B cell (primary cell): ENCODE measurements at regions of chr19 and their contacts with region 1.

Region 1: GRCh38 chr19:13880059-13881043 is 3.4 kb downstream of the NANOS3 start:
- DNase-seq: peak; percentile 96
- ATAC-seq: peak; percentile 98
- H3K4me3 ChIP-seq: peak overlapping the region in 3 of 5 experiments; percentile 12 to 27 (median 27)
- H3K4me3 Mint-ChIP-seq: peak overlapping the region; percentile 37
- H3K27ac ChIP-seq: no peak overlapping the region
- H3K27ac Mint-ChIP-seq: peak overlapping the region; percentile 61
- H3K4me1 ChIP-seq: peaks cover 26 to 34% of the 10 kb centered on the region in 2 donors
- H3K4me1 Mint-ChIP-seq: peaks cover 25% of the 10 kb centered on the region
- H3K27me3 ChIP-seq: peaks cover 0 to 3% (median 0%) of the 10 kb centered on the region in 4 experiments
- H3K27me3 Mint-ChIP-seq: no peaks in the 10 kb centered on the region
- CTCF ChIP-seq: peak; percentile 99

Region 2: GRCh38 chr19:13808856-13809255 is 71.5 kb before region 1 on chr19:
- CTCF ChIA-PET with region 1: no interaction called
- POLR2A ChIA-PET with region 1: no interaction called
- intact Hi-C with region 1: no loop called
- DNase-seq: peak; percentile 8
- ATAC-seq: no peak
- H3K4me3 ChIP-seq: no peak overlapping the region
- H3K4me3 Mint-ChIP-seq: no peak overlapping the region
- H3K27ac ChIP-seq: no peak overlapping the region
- H3K27ac Mint-ChIP-seq: no peak overlapping the region
- H3K4me1 ChIP-seq: no peaks in the 10 kb centered on the region
- H3K4me1 Mint-ChIP-seq: no peaks in the 10 kb centered on the region
- H3K27me3 ChIP-seq: no peaks in the 10 kb centered on the region
- H3K27me3 Mint-ChIP-seq: no peaks in the 10 kb centered on the region
- CTCF ChIP-seq: no peak

Region 3: GRCh38 chr19:13905938-13906904 is 25.9 kb after region 1 on chr19 and contains the starts of genes BRME1 and CC2D1A:
- CTCF ChIA-PET with region 1: interaction called, 7 read pairs
- POLR2A ChIA-PET with region 1: no interaction called
- intact Hi-C with region 1: loop called (anchors 1 kb)
- DNase-seq: peak; percentile 95
- ATAC-seq: peak; percentile 98
- H3K4me3 ChIP-seq: peak within 1 kb of the TSS; percentile 38 to 90 (median 82)
- H3K4me3 Mint-ChIP-seq: peak within 1 kb of the TSS; percentile 89
- H3K27ac ChIP-seq: peak within 1 kb of the TSS; percentile 52 to 62
- H3K27ac Mint-ChIP-seq: peak within 1 kb of the TSS; percentile 80
- H3K4me1 ChIP-seq: peaks cover 9 to 13% of the 10 kb centered on the region in 2 donors
- H3K4me1 Mint-ChIP-seq: peaks cover 13% of the 10 kb centered on the region
- H3K27me3 ChIP-seq: no peaks in the 10 kb centered on the region
- H3K27me3 Mint-ChIP-seq: no peaks in the 10 kb centered on the region
- CTCF ChIP-seq: no peak
- total RNA-seq, gene BRME1: 1.7 and 2.4 TPM in 2 replicates
- total RNA-seq, gene CC2D1A: 47.1 and 47.2 TPM in 2 replicates

Region 4: GRCh38 chr19:14031719-14032480 is 151.5 kb after region 1 on chr19 and contains the start of gene IL27RA:
- CTCF ChIA-PET with region 1: interaction called, 14 read pairs
- POLR2A ChIA-PET with region 1: no interaction called
- intact Hi-C with region 1: loop called (anchors 1 kb)
- DNase-seq: peak; percentile 84
- ATAC-seq: peak; percentile 72
- H3K4me3 ChIP-seq: peak within 1 kb of the TSS; percentile 26 to 95 (median 83)
- H3K4me3 Mint-ChIP-seq: peak within 1 kb of the TSS; percentile 94
- H3K27ac ChIP-seq: peak within 1 kb of the TSS; percentile 83 to 94
- H3K27ac Mint-ChIP-seq: peak within 1 kb of the TSS; percentile 94
- H3K4me1 ChIP-seq: peaks cover 22 to 42% of the 10 kb centered on the region in 2 donors
- H3K4me1 Mint-ChIP-seq: peaks cover 38% of the 10 kb centered on the region
- H3K27me3 ChIP-seq: no peaks in the 10 kb centered on the region
- H3K27me3 Mint-ChIP-seq: no peaks in the 10 kb centered on the region
- CTCF ChIP-seq: peak; percentile 68
- total RNA-seq, gene IL27RA: 38.2 and 38.6 TPM in 2 replicates

Region 5: GRCh38 chr19:14059093-14059480 is 178.7 kb after region 1 on chr19:
- CTCF ChIA-PET with region 1: interaction called, 16 read pairs
- POLR2A ChIA-PET with region 1: no interaction called
- intact Hi-C with region 1: no loop called
- DNase-seq: peak; percentile 68
- ATAC-seq: no peak
- H3K4me3 ChIP-seq: no peak overlapping the region
- H3K4me3 Mint-ChIP-seq: no peak overlapping the region
- H3K27ac ChIP-seq: no peak overlapping the region
- H3K27ac Mint-ChIP-seq: no peak overlapping the region
- H3K4me1 ChIP-seq: peaks cover 18 to 22% of the 10 kb centered on the region in 2 donors
- H3K4me1 Mint-ChIP-seq: peaks cover 18% of the 10 kb centered on the region
- H3K27me3 ChIP-seq: peaks cover 0 to 54% (median 28%) of the 10 kb centered on the region in 4 experiments
- H3K27me3 Mint-ChIP-seq: peaks cover 37% of the 10 kb centered on the region
- CTCF ChIP-seq: peak; percentile 81

Region 6: GRCh38 chr19:14081325-14082093 is 201.2 kb after region 1 on chr19:
- CTCF ChIA-PET with region 1: interaction called, 10 read pairs
- POLR2A ChIA-PET with region 1: no interaction called
- intact Hi-C with region 1: no loop called
- DNase-seq: peak; percentile 99
- ATAC-seq: peak; percentile 91
- H3K4me3 ChIP-seq: peak overlapping the region; percentile 65 to 89 (median 77)
- H3K4me3 Mint-ChIP-seq: peak overlapping the region; percentile 96
- H3K27ac ChIP-seq: peak overlapping the region; percentile 72 to 89
- H3K27ac Mint-ChIP-seq: peak overlapping the region; percentile 96
- H3K4me1 ChIP-seq: peaks cover 14 to 18% of the 10 kb centered on the region in 2 donors
- H3K4me1 Mint-ChIP-seq: peaks cover 12% of the 10 kb centered on the region
- H3K27me3 ChIP-seq: no peaks in the 10 kb centered on the region
- H3K27me3 Mint-ChIP-seq: no peaks in the 10 kb centered on the region
- CTCF ChIP-seq: peak; percentile 10

Region 7: DNA sequence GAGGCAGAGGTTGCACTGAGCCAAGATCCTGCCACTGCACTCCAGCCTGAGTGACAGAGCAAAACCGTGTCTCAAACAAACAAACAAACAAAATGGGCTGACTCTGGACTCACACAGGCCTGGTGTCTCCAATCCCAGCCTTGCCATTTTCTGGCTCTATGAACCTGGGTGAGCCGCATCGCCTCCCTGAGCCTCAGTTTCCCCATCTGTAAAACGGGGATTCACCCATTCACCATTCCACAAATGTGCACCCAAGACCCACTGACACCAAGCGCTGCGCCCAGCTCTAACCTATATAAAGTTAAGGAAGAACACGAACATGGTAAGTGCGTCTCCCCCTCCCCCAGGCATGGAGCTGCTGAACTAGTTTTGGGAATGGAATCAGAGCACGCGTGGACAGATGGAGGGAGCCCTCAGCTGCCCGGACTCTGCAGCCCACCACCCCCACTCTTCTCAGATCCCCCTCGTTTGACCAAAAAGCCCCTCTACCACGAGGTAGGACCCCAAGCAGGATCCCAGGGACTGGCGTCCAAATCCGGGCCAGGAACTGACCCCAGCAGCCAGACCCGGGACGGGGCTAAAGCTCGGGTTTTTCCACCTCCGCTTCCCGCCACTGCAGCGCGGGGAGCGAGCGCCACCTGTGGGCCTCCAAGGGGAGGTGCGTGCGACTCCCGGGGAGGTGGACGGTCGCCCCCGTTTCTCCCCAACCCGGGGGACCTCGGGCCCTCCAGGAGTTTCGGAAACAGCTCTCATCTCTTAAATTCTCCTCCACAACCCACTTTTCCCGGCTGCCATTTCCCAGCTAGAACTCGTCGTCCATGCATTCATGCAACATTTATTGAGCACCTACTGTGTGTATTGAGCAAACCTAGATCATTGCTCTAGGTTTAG is 467.9 kb after region 1 on chr19:
- CTCF ChIA-PET with region 1: interaction called, 5 read pairs
- POLR2A ChIA-PET with region 1: no interaction called
- intact Hi-C with region 1: loop called (anchors 1 kb)
- DNase-seq: peak; percentile 73
- ATAC-seq: peak; percentile 77
- H3K4me3 ChIP-seq: peak overlapping the region in 3 of 5 experiments; percentile 27 to 34 (median 34)
- H3K4me3 Mint-ChIP-seq: peak overlapping the region; percentile 27
- H3K27ac ChIP-seq: no peak overlapping the region
- H3K27ac Mint-ChIP-seq: no peak overlapping the region
- H3K4me1 ChIP-seq: peaks cover 21 to 24% of the 10 kb centered on the region in 2 donors
- H3K4me1 Mint-ChIP-seq: peaks cover 22% of the 10 kb centered on the region
- H3K27me3 ChIP-seq: no peaks in the 10 kb centered on the region
- H3K27me3 Mint-ChIP-seq: no peaks in the 10 kb centered on the region
- CTCF ChIP-seq: peak; percentile 89